ENCODE measurements at regions of chr5 and their contacts with region 1.

Region 1: GRCh38 chr5:113612060-113612496 is 98.6 kb downstream of the YTHDC2 start:
- DNase-seq: peak in 2 of 3 donors; percentile 14 to 24
- H3K4me3 ChIP-seq: no peak overlapping the region
- H3K4me3 Mint-ChIP-seq: no peak overlapping the region
- H3K27ac ChIP-seq: no peak overlapping the region
- H3K27ac Mint-ChIP-seq: no peak overlapping the region
- H3K4me1 ChIP-seq: no peaks in the 10 kb centered on the region
- H3K4me1 Mint-ChIP-seq: peaks cover 12% of the 10 kb centered on the region
- H3K27me3 ChIP-seq: peaks cover 0 to 2% of the 10 kb centered on the region in 2 donors
- H3K27me3 Mint-ChIP-seq: peaks cover 2 to 8% (median 3%) of the 10 kb centered on the region in 3 donors
- CTCF ChIP-seq: peak; percentile 85

Region 2: DNA sequence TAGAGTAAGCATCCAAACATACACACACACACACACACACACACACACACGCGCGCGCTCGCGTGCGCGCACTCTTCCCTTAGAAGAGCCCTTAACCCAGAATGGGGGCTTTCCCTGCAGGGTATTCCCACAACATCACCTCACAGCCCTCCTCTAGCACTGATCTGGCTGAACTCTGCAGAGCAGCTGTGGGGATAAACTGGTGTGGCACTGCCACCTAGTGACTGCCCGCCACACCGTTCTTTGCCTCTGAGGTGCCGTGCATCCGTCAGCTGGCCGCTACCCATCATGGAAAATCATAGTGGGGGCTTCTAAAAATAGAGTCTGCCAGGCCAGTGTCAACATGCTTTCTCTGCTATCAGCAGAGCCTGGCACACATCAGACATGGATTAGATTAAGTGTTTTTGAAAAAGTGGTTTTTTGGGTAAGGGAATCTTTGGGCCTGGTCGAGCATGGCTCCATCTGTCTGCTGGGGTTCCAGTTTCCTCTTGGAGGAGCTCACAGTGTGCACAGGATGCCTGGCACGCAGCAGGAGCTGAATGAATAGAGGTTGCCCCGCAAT is 837.9 kb after region 1 on chr5:
- intact Hi-C with region 1: loop called (anchors 5 to 10 kb)
- DNase-seq: peak in 2 of 3 donors; percentile 1 to 45
- H3K4me3 ChIP-seq: no peak overlapping the region
- H3K4me3 Mint-ChIP-seq: no peak overlapping the region
- H3K27ac ChIP-seq: no peak overlapping the region
- H3K27ac Mint-ChIP-seq: no peak overlapping the region
- H3K4me1 ChIP-seq: no peaks in the 10 kb centered on the region
- H3K4me1 Mint-ChIP-seq: no peaks in the 10 kb centered on the region
- H3K27me3 ChIP-seq: no peaks in the 10 kb centered on the region
- H3K27me3 Mint-ChIP-seq: peaks cover 5 to 11% (median 9%) of the 10 kb centered on the region in 3 donors
- CTCF ChIP-seq: peak; percentile 31

Region 3: GRCh38 chr5:115246361-115246991 is 1634.4 kb after region 1 on chr5:
- intact Hi-C with region 1: loop called in 1 of 2 experiments (anchors 5 kb)
- DNase-seq: peak; percentile 6 to 55 (median 28)
- H3K4me3 ChIP-seq: no peak overlapping the region
- H3K4me3 Mint-ChIP-seq: no peak overlapping the region
- H3K27ac ChIP-seq: no peak overlapping the region
- H3K27ac Mint-ChIP-seq: no peak overlapping the region
- H3K4me1 ChIP-seq: no peaks in the 10 kb centered on the region
- H3K4me1 Mint-ChIP-seq: peaks cover 15% of the 10 kb centered on the region
- H3K27me3 ChIP-seq: no peaks in the 10 kb centered on the region
- H3K27me3 Mint-ChIP-seq: no peaks in the 10 kb centered on the region
- CTCF ChIP-seq: peak; percentile 80

Measured in CD14-positive monocyte (primary cell).